ENCODE measurements at regions of chr3 and their contacts with region 1.

Region 1: DNA sequence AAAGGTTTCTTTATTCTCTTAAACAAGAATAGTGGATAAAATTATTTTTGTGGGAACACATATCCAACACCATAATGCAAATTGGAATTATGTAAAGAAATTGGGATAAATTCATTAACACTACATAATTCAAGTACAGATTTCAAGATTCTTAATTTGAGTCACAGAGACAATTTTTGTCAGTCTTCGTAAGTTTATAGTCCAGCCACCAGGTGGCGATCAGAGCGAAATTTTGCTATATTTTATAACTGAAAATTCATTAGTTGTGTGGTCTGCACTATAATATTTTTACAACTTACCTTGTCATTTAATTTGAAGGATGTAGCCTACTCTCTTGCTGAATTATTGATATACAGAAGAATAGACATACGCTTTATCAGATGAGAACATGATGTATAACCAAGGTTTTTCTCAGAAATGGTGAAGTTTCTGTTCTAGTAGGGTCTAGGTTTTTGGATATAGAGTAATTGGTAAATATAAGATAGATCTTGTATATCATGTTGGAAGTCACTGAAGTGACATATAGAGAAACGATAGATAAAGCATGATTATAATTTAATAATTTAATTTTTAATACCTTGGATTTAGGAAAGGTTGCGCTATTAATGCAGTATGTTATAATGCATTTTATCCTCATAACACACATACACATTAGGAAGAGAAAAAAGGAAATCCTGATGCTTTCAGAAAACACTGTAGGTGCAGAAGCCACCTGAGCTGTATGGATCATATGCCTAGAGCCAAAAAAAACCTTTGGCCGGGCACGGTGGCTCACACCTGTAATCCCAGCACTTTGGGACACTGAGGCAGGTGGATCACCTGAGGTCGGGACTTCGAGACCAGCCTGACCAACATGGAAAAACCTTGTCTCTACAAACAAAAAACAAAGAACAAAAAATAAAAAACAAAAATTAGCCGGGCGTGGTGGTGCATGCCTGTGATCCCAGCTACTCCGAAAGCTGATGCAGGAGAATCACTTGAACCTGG is 31.7 kb downstream of the PLSCR4 start:
- DNase-seq: no peak
- H3K4me3 ChIP-seq: no peak overlapping the region
- H3K27ac ChIP-seq: no peak overlapping the region
- H3K4me1 ChIP-seq: peaks cover 0 to 20% (median 3%) of the 10 kb centered on the region in 4 donors
- H3K27me3 ChIP-seq: no peaks in the 10 kb centered on the region
- CTCF ChIP-seq: peak; percentile 68 to 70

Region 2: GRCh38 chr3:146326670-146327543 is 107.7 kb after region 1 on chr3:
- intact Hi-C with region 1: loop called (anchors 2 kb)
- DNase-seq: no peak
- H3K4me3 ChIP-seq: no peak overlapping the region
- H3K27ac ChIP-seq: no peak overlapping the region
- H3K4me1 ChIP-seq: peaks cover 0 to 4% (median 1%) of the 10 kb centered on the region in 4 donors
- H3K27me3 ChIP-seq: no peaks in the 10 kb centered on the region
- CTCF ChIP-seq: peak; percentile 51 to 75

Region 3: DNA sequence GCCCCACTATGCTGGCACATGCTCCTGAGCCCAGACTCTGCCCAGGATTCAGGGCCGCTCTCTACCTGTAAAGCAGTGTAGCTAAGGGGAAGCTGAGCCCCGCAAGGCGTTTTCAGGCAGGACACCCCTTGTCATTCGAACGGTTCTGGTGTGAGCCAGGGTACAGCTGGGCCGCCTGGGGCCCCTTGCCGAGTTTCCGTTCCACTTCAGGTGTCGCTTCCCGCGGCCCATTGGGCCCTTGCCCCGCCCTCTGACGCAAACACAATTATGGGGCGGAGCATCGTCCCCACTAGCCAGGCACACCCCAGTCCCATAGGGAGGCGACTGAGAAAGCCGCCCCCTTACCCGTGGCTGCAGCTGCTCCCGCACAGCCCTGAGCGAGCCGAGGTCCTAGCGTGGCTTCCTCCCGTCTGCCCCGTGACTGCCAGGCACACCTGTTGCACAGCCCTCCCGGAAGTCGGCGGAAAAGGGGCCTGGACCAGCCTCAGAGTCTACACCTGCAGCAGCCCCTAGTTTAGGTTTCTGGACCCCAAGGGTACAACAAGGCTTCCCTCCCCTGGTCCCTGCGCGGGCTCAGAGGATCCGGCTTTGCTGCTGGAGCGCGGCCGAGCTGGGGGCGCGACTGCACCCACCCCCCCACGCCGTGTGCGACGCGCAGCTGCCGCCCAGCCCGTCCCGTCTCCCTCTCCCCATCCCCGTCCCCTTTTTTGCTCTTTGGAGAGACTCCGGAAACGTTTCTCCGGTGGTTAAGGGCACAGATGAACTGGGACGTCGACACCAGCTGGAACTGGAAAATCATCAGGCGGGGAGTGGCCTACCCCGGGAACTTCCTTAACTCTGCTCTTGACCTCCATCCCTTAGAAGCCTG is 250.2 kb after region 1 on chr3 and contains the start of gene PLSCR2:
- intact Hi-C with region 1: no loop called
- DNase-seq: peak in 1 of 2 donors; percentile 79
- H3K4me3 ChIP-seq: peak within 1 kb of the TSS; percentile 55 to 66
- H3K27ac ChIP-seq: peak within 1 kb of the TSS; percentile 19 to 68
- H3K4me1 ChIP-seq: peaks cover 0 to 24% (median 7%) of the 10 kb centered on the region in 4 donors
- H3K27me3 ChIP-seq: no peaks in the 10 kb centered on the region
- CTCF ChIP-seq: no peak

Region 4: GRCh38 chr3:146640955-146641867 is 422.0 kb after region 1 on chr3:
- intact Hi-C with region 1: loop called (anchors 10 kb)
- DNase-seq: no peak
- H3K4me3 ChIP-seq: no peak overlapping the region
- H3K27ac ChIP-seq: no peak overlapping the region
- H3K4me1 ChIP-seq: no peaks in the 10 kb centered on the region
- H3K27me3 ChIP-seq: no peaks in the 10 kb centered on the region
- CTCF ChIP-seq: no peak